Esophagus muscularis mucosa (tissue), 4 donors: ENCODE measurements at regions of chr6 and their contacts with region 1.

Region 1: DNA sequence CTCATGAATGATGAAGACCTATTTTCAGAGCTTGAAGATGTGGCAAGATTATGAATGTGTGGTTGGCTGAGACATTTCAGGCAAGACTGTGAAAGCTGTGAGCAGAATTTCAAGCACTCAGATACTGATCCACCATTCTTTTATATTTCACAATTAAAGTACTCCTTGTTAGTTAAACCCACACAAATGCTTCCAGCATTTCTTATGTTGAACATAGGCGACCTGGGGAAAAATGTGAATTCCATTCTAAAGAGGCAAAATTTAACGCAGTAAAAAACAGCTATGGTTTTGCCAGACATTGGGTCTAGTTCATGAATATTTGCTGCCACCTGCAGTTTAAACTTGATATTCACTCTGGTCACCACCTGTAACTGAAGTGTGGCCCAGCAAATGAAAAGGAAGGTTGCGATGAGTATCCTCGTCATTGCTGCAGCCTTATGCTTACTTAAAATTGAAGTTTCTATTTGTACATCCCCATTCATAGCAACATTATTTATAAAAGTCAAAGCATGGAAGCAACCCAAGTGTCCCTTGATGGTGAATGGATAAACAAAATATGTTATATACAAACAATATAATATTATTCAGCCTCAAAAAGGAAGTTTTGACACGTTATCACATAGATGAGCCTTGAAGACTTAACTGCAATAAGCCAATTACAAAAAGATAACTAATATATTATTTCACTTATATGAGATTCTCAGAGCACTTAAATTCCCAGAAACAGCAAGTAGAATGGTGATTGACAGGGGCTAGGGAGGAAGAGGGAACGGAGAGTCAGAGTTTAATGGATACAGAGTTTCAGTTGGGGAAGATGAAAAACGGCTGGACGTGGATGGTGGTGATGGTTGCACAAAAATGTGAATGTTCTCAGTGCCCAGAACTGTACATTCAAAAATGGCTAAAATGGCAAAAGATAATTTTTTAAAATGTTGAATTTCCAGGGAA is 32.4 kb upstream of the FAM184A start:
- DNase-seq: peak; percentile 34
- H3K4me3 ChIP-seq: no peak overlapping the region
- H3K27ac ChIP-seq: no peak overlapping the region
- H3K4me1 ChIP-seq: peaks cover 0 to 12% (median 9%) of the 10 kb centered on the region in 4 donors
- H3K27me3 ChIP-seq: no peaks in the 10 kb centered on the region
- CTCF ChIP-seq: peak; percentile 62 to 73 (median 71)
- EP300 ChIP-seq: no peak
- POLR2A ChIP-seq: no peak

Region 2: DNA sequence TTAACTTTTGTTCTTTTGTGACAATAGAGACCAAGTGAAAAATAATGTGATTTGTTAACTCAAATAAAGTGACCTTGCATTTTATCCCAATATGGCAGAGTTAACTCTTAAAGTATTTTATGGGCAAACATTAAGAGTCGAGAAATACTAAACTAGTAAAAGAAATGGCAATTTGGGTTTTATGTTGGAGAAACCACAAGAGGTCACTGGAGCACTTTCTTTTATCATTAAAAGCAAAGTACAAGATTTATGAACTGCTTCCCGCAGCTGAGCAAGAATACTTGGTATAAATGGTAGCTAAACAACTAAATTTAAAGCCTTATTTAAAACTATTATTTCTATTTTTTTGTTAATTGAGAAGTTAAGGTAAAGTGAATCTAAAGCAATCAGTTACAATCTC is 142.5 kb before region 1 on chr6:
- intact Hi-C with region 1: loop called (anchors 1 kb)
- DNase-seq: no peak
- H3K4me3 ChIP-seq: no peak overlapping the region
- H3K27ac ChIP-seq: no peak overlapping the region
- H3K4me1 ChIP-seq: no peaks in the 10 kb centered on the region
- H3K27me3 ChIP-seq: no peaks in the 10 kb centered on the region
- CTCF ChIP-seq: peak; percentile 44 to 54 (median 44)
- EP300 ChIP-seq: no peak
- POLR2A ChIP-seq: no peak

Region 3: DNA sequence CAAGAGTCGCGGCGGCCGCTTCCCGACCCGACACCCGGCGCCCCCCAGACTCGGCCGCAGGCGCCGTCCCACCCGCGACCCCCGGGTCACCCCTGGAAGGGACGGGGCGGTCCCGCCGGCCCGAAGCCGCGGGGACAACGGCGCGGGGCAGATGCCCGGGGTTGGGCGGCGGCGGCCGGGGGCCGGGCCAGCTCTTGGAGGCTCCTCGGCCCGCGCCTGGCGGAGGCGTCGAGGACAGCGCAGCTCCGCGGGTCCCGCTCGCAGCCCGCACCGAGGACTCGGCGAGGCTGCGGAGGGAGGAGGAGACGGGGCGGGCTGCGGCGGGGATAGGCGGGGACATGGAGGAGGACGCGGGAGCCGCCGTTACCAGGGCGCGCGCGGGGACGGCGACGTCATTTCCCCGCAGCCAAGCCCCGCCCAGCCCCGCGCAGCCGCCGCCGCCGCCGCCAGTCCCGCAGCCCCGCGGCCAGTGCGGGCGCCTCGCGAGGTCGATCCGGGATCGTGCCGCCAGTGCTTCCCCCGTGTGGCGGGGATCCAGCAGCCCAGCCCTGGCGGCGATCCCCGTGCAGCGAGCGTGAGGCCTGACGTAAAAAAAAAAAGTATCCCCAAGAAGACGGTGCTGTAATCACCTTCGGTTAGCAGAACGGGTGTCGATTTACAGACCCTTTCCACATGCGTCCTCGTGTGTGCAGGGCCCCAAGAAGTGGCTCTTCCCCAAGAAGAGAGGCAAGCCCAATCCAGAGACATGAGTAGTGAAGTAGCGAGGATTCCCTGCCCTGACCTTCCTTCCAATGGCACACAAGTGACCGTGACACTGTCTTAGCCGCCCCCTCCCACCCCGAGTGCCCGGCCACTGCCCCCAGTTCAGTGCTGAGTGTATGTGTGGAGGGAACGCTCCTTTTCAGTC is 32.2 kb before region 1 on chr6 and contains the start of gene FAM184A:
- intact Hi-C with region 1: loop called (anchors 2 kb)
- DNase-seq: peak; percentile 91
- H3K4me3 ChIP-seq: peak within 1 kb of the TSS; percentile 85 to 90 (median 88)
- H3K27ac ChIP-seq: peak within 1 kb of the TSS; percentile 88 to 96 (median 92)
- H3K4me1 ChIP-seq: peaks cover 7 to 53% (median 35%) of the 10 kb centered on the region in 4 donors
- H3K27me3 ChIP-seq: no peaks in the 10 kb centered on the region
- CTCF ChIP-seq: peak; percentile 19 to 53 (median 29)
- EP300 ChIP-seq: no peak
- POLR2A ChIP-seq: no peak
- total RNA-seq, gene FAM184A: 7.6 to 11.2 (median 9.0) TPM

Region 4: DNA sequence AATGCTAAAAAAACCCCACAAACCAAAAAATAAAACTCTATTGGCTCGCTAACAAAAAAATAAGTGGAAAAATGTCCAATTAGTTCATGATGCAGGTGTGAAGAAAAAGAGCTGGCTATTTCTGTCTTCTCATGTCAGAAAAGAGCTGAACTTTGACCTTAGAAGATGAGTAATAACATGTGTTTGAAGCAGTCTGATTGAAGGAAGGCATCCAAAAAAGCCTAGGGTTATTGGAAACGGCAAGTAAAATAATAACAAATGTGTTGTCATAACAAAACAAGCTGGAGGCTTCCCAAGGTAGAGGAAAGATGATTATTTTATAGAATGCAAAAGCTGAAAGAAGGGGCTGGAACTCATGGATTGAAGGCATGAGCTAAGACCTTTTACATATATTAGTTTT is 61.9 kb after region 1 on chr6:
- intact Hi-C with region 1: no loop called
- DNase-seq: no peak
- H3K4me3 ChIP-seq: no peak overlapping the region
- H3K27ac ChIP-seq: no peak overlapping the region
- H3K4me1 ChIP-seq: peaks cover 5 to 53% (median 36%) of the 10 kb centered on the region in 4 donors
- H3K27me3 ChIP-seq: no peaks in the 10 kb centered on the region
- CTCF ChIP-seq: no peak
- EP300 ChIP-seq: no peak
- POLR2A ChIP-seq: no peak